ENCODE measurements at regions of chr1 and their contacts with region 1.

Region 1: DNA sequence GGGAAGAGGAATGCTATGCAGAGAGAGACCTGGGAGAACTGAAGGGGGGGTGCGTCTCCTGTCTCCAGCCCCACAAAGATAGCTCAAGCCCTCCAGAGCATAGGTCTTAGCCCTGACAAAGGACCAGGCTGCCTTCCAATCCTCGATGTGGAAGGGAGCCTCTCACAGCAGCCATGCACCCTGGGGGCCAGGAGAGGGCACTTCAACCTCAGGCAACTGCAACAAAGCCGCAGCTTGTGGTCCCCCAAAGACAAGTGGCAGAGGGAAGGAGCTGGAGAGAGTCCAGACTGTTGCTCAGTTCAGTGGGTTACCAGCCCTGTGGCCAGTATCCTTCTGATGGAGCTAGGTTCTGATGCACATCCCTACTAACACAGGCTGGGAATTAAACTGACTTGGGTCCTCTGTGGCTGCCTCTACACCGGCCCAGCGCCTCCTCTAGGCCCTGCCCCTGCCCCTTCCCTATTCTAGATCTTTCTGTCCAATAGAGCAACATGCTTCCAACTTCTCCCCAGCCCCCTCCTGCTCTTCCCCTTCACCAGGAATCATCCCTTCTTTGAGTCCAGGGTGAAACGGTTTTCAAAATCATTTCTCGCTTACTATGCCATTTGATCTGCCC is 100.8 kb upstream of the SPATA6 start:
- ATAC-seq: peak; percentile 83 to 99 (median 99)
- H3K4me3 ChIP-seq: no peak overlapping the region
- H3K27ac ChIP-seq: no peak overlapping the region
- H3K4me1 ChIP-seq: peaks cover 3 to 9% of the 10 kb centered on the region in 2 donors

Region 2: GRCh38 chr1:48697066-48697707 is 124.4 kb after region 1 on chr1:
- in situ Hi-C with region 1: loop called in 1 of 9 experiments (anchors 10 kb)
- ATAC-seq: peak in 4 of 8 experiments; percentile 19 to 59 (median 49)
- H3K4me3 ChIP-seq: no peak overlapping the region
- H3K27ac ChIP-seq: no peak overlapping the region
- H3K4me1 ChIP-seq: peaks cover 14 to 22% of the 10 kb centered on the region in 2 donors

Measured in motor neuron (in vitro differentiated cells).